ENCODE measurements at regions of chr1 and their contacts with region 1.

Region 1: DNA sequence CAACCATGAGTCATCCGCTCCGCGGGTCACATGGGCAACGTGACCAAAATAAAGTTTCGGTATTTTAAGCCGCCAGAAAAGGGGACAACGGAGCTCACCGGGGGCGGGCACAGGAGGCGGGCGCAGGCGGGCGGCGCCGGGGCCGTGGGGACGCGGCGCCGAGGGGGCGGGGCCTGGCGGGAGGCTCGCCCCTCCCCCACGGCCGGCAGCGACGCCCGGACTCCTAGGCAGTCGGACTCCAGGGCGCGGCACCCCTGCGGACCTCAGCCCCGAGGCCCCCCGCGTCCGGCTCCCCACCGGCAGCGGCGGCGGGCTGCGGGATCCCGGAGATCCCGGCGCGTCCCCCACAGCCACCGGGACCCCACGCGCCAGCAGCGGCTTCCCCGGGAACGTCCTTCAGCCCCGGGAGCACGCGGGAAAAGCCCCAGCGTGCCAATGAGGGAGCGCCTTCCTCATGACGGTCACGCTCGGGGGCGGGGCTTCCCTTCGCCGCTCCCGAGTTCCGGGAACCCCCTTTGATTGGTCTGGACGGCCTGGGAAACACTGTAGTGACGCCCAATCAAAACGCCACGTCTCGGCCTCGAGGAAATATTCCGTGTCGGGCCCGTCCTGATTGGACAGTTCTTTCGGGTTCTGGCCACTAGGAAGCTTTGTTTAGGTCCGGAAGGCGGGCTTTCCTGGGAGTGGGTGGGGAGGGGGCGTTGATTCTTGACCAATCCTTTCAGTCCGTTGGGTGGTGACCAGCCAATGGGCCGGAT is 515 bp upstream of the CAMTA1 start:
- DNase-seq: peak; percentile 100
- H3K4me3 Mint-ChIP-seq: peak overlapping the region; percentile 86
- H3K27ac Mint-ChIP-seq: peak overlapping the region; percentile 94
- H3K4me1 Mint-ChIP-seq: peaks cover 27% of the 10 kb centered on the region
- H3K27me3 Mint-ChIP-seq: no peaks in the 10 kb centered on the region
- CTCF ChIP-seq: no peak

Region 2: DNA sequence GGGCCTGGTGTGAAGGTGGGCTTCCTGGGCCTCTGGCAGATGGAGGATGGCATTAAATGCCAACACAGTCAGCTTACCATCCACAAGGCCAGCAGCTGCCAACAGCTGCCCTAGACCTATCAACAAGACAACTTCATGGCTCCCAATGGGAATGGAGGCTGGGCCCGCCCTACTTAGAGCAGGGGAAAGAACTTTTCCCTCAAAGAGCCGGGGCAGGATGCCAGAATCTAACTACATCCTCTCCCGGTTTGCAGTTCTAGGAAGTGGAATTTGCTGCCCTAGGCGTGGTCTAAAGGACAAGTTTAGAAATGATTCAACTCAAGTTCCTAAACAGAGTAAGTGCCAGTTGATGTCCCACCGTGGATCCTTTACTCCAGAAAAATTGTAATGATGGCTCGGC is 562.1 kb before region 1 on chr1:
- CTCF ChIA-PET with region 1: no interaction called
- POLR2A ChIA-PET with region 1: no interaction called
- intact Hi-C with region 1: no loop called
- DNase-seq: peak; percentile 43
- H3K4me3 Mint-ChIP-seq: no peak overlapping the region
- H3K27ac Mint-ChIP-seq: no peak overlapping the region
- H3K4me1 Mint-ChIP-seq: peaks cover 9% of the 10 kb centered on the region
- H3K27me3 Mint-ChIP-seq: no peaks in the 10 kb centered on the region
- CTCF ChIP-seq: no peak

Region 3: GRCh38 chr1:6579374-6580118 is 205.2 kb before region 1 on chr1 and contains the start of gene ZBTB48:
- CTCF ChIA-PET with region 1: no interaction called
- POLR2A ChIA-PET with region 1: no interaction called
- intact Hi-C with region 1: no loop called
- DNase-seq: peak; percentile 99
- H3K4me3 Mint-ChIP-seq: peak within 1 kb of the TSS; percentile 94
- H3K27ac Mint-ChIP-seq: peak within 1 kb of the TSS; percentile 100
- H3K4me1 Mint-ChIP-seq: peaks cover 27% of the 10 kb centered on the region
- H3K27me3 Mint-ChIP-seq: no peaks in the 10 kb centered on the region
- CTCF ChIP-seq: no peak
- total RNA-seq, gene ZBTB48: 40.6 TPM in 2 replicates

Region 4: GRCh38 chr1:6701437-6702153 is 83.1 kb before region 1 on chr1 and contains the start of gene DNAJC11:
- CTCF ChIA-PET with region 1: interaction called, 10 read pairs
- POLR2A ChIA-PET with region 1: interaction called, 16 read pairs
- intact Hi-C with region 1: no loop called
- DNase-seq: peak; percentile 83
- H3K4me3 Mint-ChIP-seq: peak within 1 kb of the TSS; percentile 83
- H3K27ac Mint-ChIP-seq: peak within 1 kb of the TSS; percentile 90
- H3K4me1 Mint-ChIP-seq: peaks cover 10% of the 10 kb centered on the region
- H3K27me3 Mint-ChIP-seq: peaks cover 1% of the 10 kb centered on the region
- CTCF ChIP-seq: peak; percentile 95
- total RNA-seq, gene DNAJC11: 70.4 and 76.1 TPM in 2 replicates

Region 5: GRCh38 chr1:6732942-6733341 is 51.8 kb before region 1 on chr1:
- CTCF ChIA-PET with region 1: interaction called, 4 read pairs
- POLR2A ChIA-PET with region 1: interaction called, 10 read pairs
- intact Hi-C with region 1: no loop called
- DNase-seq: no peak
- H3K4me3 Mint-ChIP-seq: no peak overlapping the region
- H3K27ac Mint-ChIP-seq: no peak overlapping the region
- H3K4me1 Mint-ChIP-seq: no peaks in the 10 kb centered on the region
- H3K27me3 Mint-ChIP-seq: no peaks in the 10 kb centered on the region
- CTCF ChIP-seq: no peak

Region 6: GRCh38 chr1:6753320-6754140 is 31.2 kb before region 1 on chr1:
- CTCF ChIA-PET with region 1: no interaction called
- POLR2A ChIA-PET with region 1: interaction called, 25 read pairs
- intact Hi-C with region 1: no loop called
- DNase-seq: peak; percentile 43
- H3K4me3 Mint-ChIP-seq: peak overlapping the region; percentile 44
- H3K27ac Mint-ChIP-seq: peak overlapping the region; percentile 14
- H3K4me1 Mint-ChIP-seq: peaks cover 14% of the 10 kb centered on the region
- H3K27me3 Mint-ChIP-seq: peaks cover 13% of the 10 kb centered on the region
- CTCF ChIP-seq: no peak

Region 7: GRCh38 chr1:6770751-6771440 is 13.8 kb before region 1 on chr1:
- CTCF ChIA-PET with region 1: no interaction called
- POLR2A ChIA-PET with region 1: interaction called, 40 read pairs
- intact Hi-C with region 1: no loop called
- DNase-seq: peak; percentile 58
- H3K4me3 Mint-ChIP-seq: peak overlapping the region; percentile 9
- H3K27ac Mint-ChIP-seq: no peak overlapping the region
- H3K4me1 Mint-ChIP-seq: peaks cover 7% of the 10 kb centered on the region
- H3K27me3 Mint-ChIP-seq: no peaks in the 10 kb centered on the region
- CTCF ChIP-seq: no peak

Region 8: GRCh38 chr1:6868660-6869380 is 84.1 kb after region 1 on chr1:
- CTCF ChIA-PET with region 1: interaction called, 3 read pairs
- POLR2A ChIA-PET with region 1: interaction called, 38 read pairs
- intact Hi-C with region 1: no loop called
- DNase-seq: no peak
- H3K4me3 Mint-ChIP-seq: peak overlapping the region; percentile 63
- H3K27ac Mint-ChIP-seq: peak overlapping the region; percentile 95
- H3K4me1 Mint-ChIP-seq: peaks cover 55% of the 10 kb centered on the region
- H3K27me3 Mint-ChIP-seq: no peaks in the 10 kb centered on the region
- CTCF ChIP-seq: no peak